Ascending aorta (tissue), 2 donors: ENCODE measurements at regions of chrX and their contacts with region 1.

Region 1: GRCh38 chrX:48917139-48918001 is 1.5 kb downstream of the PIM2 start:
- DNase-seq: peak; percentile 69 to 96
- H3K4me3 ChIP-seq: peak overlapping the region; percentile 36 to 74
- H3K27ac ChIP-seq: peak overlapping the region; percentile 74 to 91
- H3K4me1 ChIP-seq: peaks cover 0 to 3% of the 10 kb centered on the region in 2 donors
- H3K27me3 ChIP-seq: no peaks in the 10 kb centered on the region
- CTCF ChIP-seq: peak; percentile 89 to 92 (median 91)

Region 2: DNA sequence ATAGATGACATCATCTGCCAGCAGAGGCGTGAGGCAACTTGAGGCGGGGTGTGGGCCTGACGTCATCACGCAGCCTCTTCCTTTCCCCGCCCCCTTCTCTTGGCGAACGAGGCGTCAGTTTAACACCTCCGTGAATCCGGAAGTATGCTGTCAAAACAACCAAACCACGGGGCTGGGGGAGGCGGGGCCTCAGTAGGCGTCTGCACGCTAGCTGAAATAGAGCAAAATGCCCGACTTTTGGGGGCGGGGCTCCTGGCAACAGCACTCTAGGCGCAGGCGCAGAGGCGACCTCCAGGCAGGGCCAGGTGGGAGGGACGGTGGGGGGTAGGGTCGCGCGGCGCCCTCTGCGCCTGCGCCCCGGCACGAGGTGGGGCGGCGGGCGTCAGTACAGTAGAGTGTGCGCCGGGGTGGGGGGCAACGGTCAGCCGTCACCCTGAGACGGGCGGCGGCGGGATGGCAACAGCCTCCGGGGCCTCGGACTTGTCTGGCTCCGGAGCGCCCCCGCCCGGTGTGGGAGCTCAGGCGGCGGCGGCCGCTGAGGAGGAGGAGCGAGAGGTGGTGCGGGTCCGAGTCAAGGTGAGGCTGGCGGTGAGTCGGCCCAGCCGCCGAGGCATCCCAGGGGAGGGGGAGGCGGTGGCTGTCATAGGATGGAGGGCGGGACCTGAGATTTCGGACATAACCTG is 377.9 kb before region 1 on chrX and contains the start of gene TBC1D25:
- intact Hi-C with region 1: loop called (anchors 10 kb)
- DNase-seq: peak; percentile 93 to 98
- H3K4me3 ChIP-seq: peak within 1 kb of the TSS; percentile 53 to 78
- H3K27ac ChIP-seq: peak within 1 kb of the TSS; percentile 79 to 87
- H3K4me1 ChIP-seq: no peaks in the 10 kb centered on the region
- H3K27me3 ChIP-seq: no peaks in the 10 kb centered on the region
- CTCF ChIP-seq: peak; percentile 20 to 55 (median 43)
- total RNA-seq, gene TBC1D25: 8.2 TPM

Region 3: DNA sequence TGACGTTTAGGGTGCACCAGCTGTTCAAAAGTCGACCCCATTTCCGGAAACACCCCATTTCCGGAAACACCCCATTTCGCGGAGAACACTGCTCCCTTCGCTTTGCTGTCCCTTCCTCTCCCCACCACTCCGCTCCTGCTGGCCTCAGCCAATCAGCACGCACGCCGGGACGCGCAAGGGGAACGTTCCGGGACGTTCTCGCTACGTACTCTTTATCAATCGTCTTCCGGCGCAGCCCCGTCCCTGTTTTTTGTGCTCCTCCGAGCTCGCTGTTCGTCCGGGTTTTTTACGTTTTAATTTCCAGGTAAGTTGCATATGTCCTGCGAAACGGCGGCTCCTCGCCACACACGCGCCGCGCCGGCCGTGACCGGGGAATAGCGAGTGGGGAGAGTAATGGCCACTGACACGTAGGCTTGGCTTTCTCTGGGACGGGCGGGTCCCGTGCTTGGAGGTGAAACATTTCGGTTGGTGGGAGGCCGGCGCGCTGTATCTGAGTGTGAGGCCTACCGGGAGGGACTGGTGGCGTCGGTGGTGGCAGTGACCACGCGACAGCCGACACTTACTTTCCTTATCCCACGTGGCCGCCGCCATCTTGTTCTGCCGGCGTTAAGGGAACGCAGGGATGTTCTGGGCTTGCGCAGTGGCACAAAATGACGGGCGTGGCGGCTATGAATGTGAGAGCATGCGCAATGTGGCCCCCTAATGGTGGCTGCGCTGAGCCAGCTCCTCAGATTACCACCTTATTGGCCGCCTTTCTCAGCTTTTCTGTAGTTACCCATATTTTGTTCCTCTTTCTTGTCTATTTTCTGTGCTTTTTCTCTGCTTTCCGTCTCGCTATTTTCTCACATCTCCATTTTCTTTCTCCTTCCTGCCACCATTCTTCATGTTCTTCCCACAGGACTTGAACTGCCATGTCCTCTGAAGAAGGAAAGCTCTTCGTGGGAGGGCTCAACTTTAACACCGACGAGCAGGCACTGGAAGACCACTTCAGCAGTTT is 342.8 kb before region 1 on chrX and contains the start of gene RBM3:
- intact Hi-C with region 1: loop called (anchors 5 kb)
- DNase-seq: peak; percentile 77 to 95
- H3K4me3 ChIP-seq: peak within 1 kb of the TSS; percentile 71 to 78
- H3K27ac ChIP-seq: peak within 1 kb of the TSS; percentile 96 to 99
- H3K4me1 ChIP-seq: peaks cover 0 to 7% of the 10 kb centered on the region in 2 donors
- H3K27me3 ChIP-seq: no peaks in the 10 kb centered on the region
- CTCF ChIP-seq: peak in 2 of 3 experiments; percentile 30 to 36
- total RNA-seq, gene RBM3: 119 TPM

Region 4: GRCh38 chrX:48696301-48697181 is 220.8 kb before region 1 on chrX and contains the start of gene SUV39H1:
- intact Hi-C with region 1: loop called (anchors 2 kb)
- DNase-seq: peak; percentile 47 to 93
- H3K4me3 ChIP-seq: peak within 1 kb of the TSS; percentile 77 to 88
- H3K27ac ChIP-seq: peak within 1 kb of the TSS; percentile 87 to 92
- H3K4me1 ChIP-seq: no peaks in the 10 kb centered on the region
- H3K27me3 ChIP-seq: no peaks in the 10 kb centered on the region
- CTCF ChIP-seq: no peak
- total RNA-seq, gene SUV39H1: 0.21 TPM

Region 5: GRCh38 chrX:48854898-48855297 is 62.5 kb before region 1 on chrX:
- intact Hi-C with region 1: no loop called
- DNase-seq: no peak
- H3K4me3 ChIP-seq: no peak overlapping the region
- H3K27ac ChIP-seq: no peak overlapping the region
- H3K4me1 ChIP-seq: no peaks in the 10 kb centered on the region
- H3K27me3 ChIP-seq: no peaks in the 10 kb centered on the region
- CTCF ChIP-seq: no peak

Region 6: DNA sequence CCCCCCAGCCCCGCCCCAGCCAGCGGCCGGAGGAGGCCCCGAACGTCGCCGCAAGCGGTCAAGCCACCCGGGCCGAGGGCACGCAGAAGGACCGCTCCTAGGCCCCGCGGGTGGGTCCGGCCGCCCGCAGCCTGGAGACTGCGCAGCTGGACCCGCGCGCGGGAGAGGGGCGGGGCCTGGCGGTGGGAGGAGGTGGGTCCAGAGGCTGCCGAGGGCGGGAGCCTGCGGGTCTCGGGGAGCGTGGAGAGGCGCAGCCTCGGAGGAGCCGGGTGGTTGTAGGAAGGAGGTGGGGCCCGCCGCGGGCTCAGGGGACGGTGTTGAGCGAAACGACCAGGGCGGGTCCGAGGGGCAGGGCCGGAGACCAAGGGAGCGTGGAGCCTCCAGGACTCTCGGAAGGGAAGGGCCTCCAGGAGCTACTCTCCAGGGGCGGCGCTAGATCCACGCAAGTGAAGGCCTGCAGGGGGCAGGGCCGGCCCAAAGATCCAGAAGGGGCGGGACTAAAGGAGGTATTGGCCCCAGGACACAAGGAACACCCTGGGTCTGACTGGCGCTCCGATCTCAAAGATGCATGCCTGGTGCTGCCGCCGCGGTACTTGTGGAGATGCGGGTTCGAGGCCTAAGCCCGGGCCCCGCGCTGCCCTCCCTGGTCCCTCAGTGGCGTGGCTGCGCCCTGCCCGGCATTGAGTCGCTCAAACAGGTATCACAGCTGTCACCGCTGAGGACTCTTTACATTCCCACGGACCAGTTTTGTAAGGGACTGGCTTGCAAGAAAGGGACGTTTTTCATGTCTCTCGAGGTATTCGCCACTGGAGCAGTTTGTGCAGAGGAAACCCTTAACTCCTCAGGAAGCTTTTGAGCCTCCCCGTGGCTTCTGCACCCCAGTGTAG is 25.7 kb before region 1 on chrX:
- intact Hi-C with region 1: loop called (anchors 2 kb)
- DNase-seq: peak; percentile 70 to 94
- H3K4me3 ChIP-seq: peak overlapping the region; percentile 61 to 63
- H3K27ac ChIP-seq: peak overlapping the region; percentile 60 to 74
- H3K4me1 ChIP-seq: peaks cover 0 to 6% of the 10 kb centered on the region in 2 donors
- H3K27me3 ChIP-seq: no peaks in the 10 kb centered on the region
- CTCF ChIP-seq: peak; percentile 40 to 54 (median 53)

Region 7: GRCh38 chrX:48957827-48958634 is 40.7 kb after region 1 on chrX:
- intact Hi-C with region 1: loop called (anchors 1 kb)
- DNase-seq: peak; percentile 90 to 98
- H3K4me3 ChIP-seq: peak overlapping the region; percentile 58 to 86
- H3K27ac ChIP-seq: peak overlapping the region; percentile 90 to 92
- H3K4me1 ChIP-seq: no peaks in the 10 kb centered on the region
- H3K27me3 ChIP-seq: no peaks in the 10 kb centered on the region
- CTCF ChIP-seq: no peak

Region 8: GRCh38 chrX:49163555-49164419 is 246.4 kb after region 1 on chrX:
- intact Hi-C with region 1: loop called (anchors 10 kb)
- DNase-seq: peak; percentile 65 to 92
- H3K4me3 ChIP-seq: peak overlapping the region; percentile 30 to 64
- H3K27ac ChIP-seq: peak overlapping the region; percentile 88 to 91
- H3K4me1 ChIP-seq: peaks cover 0 to 4% of the 10 kb centered on the region in 2 donors
- H3K27me3 ChIP-seq: no peaks in the 10 kb centered on the region
- CTCF ChIP-seq: peak; percentile 28 to 96 (median 51)